ENCODE measurements at regions of chr2 and their contacts with region 1.

Region 1: DNA sequence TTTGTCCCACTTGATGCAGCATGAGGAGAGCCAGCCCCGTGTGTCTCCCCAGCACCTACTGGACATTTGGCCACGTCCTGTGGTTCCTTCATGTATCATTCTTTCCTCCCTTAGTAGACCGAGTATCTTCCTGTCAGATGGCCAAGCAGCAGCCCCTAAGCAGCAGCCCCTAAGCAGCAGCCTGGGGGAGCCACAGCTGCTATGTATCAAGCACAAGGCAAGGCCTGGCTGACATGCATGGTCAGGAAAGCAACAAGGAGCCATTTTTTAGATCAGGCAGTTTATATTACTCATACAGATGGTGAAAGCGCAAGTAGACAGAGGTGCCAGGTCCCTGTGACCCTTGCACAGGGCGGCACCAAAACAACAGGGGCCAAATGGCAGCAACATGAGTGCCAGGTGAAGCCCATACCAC is 22.1 kb downstream of the CHCHD5 start:
- DNase-seq: no peak
- H3K4me3 ChIP-seq: no peak overlapping the region
- H3K27ac ChIP-seq: no peak overlapping the region
- H3K4me1 ChIP-seq: no peaks in the 10 kb centered on the region
- CTCF ChIP-seq: no peak

Region 2: DNA sequence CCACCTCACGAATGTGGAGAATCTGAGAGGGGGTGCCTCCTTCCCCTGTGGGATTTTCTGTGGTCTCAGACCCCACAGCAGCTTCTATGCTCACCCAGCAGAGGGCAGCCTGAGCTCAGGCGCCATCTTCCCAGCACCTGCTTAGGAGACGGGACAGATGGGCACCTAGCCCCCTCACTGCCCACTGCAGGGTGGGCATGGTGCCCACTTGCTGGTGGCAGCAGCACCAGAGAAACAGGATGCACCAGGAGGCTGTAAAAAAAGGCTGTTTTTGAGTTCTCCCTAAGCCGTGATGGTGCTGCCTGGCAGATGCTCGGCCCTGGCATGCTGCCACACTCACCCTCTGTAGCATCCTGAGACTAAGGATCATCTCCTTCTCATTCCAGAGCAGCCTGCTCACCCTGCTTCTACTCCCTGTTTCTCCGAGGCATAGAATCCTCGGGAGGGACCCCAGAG is 20.1 kb after region 1 on chr2:
- CTCF ChIA-PET with region 1: no interaction called
- POLR2A ChIA-PET with region 1: no interaction called
- intact Hi-C with region 1: no loop called
- DNase-seq: peak; percentile 72
- H3K4me3 ChIP-seq: peak overlapping the region; percentile 23
- H3K27ac ChIP-seq: no peak overlapping the region
- H3K4me1 ChIP-seq: peaks cover 15% of the 10 kb centered on the region
- CTCF ChIP-seq: peak; percentile 94

Region 3: GRCh38 chr2:112958428-112959108 is 352.1 kb after region 1 on chr2:
- CTCF ChIA-PET with region 1: no interaction called
- POLR2A ChIA-PET with region 1: no interaction called
- intact Hi-C with region 1: loop called (anchors 10 kb)
- DNase-seq: peak; percentile 63
- H3K4me3 ChIP-seq: no peak overlapping the region
- H3K27ac ChIP-seq: no peak overlapping the region
- H3K4me1 ChIP-seq: no peaks in the 10 kb centered on the region
- CTCF ChIP-seq: peak; percentile 93

Measured in OCI-LY7 (cell line).